WTC11 (cell line): ENCODE measurements at regions of chr20 and their contacts with region 1.

Region 1: DNA sequence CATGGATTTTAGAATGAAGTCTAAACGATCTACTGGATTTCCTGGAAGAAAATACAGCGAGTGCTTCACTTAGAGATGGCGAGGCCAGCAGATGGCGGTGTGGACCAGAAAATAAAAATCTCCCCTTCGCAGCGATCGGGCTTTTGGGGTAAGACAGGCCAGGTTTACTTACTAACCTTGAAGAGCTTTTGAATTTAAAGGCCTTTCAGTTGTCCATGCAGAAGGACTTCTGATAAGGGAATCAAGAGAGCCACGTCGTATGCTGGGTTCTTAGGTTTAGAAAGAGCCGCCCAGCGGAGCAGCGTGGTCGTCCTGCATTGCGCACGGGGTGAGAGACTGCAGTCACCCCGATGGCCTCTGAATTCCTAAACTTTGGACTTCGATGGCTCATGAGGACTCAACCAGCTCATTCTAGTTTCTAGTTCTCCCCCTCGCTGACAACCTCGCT is 125.2 kb upstream of the RALGAPA2 start:
- DNase-seq: peak; percentile 68
- ATAC-seq: peak; percentile 78
- H3K4me3 Mint-ChIP-seq: peak overlapping the region; percentile 46
- H3K27ac Mint-ChIP-seq: no peak overlapping the region
- H3K4me1 Mint-ChIP-seq: peaks cover 6% of the 10 kb centered on the region; the same call in 1 of the 2 replicates
- H3K27me3 Mint-ChIP-seq: peaks cover 3% of the 10 kb centered on the region
- CTCF ChIP-seq: peak; percentile 67

Region 2: DNA sequence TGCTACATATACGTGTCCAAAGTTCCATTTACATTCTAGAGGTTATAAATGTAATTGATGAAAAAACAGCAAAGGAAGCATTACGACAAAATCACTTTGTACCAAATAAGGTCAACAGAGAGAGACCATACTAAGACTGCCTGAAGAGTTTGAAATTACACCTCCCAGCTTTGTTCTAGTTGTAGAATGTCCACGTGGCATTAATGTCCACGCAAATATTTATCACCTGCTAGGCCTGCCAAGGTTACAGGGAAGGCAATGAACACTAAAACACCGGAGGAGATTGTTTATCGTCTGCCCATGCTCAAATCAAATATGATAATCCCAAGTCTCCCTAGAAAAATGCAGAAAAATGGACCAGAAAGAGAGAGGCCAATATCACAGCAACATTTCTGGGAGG is 131.3 kb before region 1 on chr20:
- CTCF ChIA-PET with region 1: no interaction called
- POLR2A ChIA-PET with region 1: no interaction called
- DNase-seq: no peak
- ATAC-seq: no peak
- H3K4me3 Mint-ChIP-seq: no peak overlapping the region
- H3K27ac Mint-ChIP-seq: no peak overlapping the region
- H3K4me1 Mint-ChIP-seq: peaks cover 20% of the 10 kb centered on the region
- H3K27me3 Mint-ChIP-seq: no peaks in the 10 kb centered on the region
- CTCF ChIP-seq: no peak

Region 3: GRCh38 chr20:20860078-20860806 is 22.6 kb after region 1 on chr20:
- CTCF ChIA-PET with region 1: interaction called, 48 read pairs
- POLR2A ChIA-PET with region 1: no interaction called
- DNase-seq: peak; percentile 99
- ATAC-seq: peak; percentile 81
- H3K4me3 Mint-ChIP-seq: no peak overlapping the region
- H3K27ac Mint-ChIP-seq: no peak overlapping the region
- H3K4me1 Mint-ChIP-seq: no peaks in the 10 kb centered on the region; the same call in 1 of the 2 replicates
- H3K27me3 Mint-ChIP-seq: peaks cover 4% of the 10 kb centered on the region
- CTCF ChIP-seq: peak; percentile 80

Region 4: DNA sequence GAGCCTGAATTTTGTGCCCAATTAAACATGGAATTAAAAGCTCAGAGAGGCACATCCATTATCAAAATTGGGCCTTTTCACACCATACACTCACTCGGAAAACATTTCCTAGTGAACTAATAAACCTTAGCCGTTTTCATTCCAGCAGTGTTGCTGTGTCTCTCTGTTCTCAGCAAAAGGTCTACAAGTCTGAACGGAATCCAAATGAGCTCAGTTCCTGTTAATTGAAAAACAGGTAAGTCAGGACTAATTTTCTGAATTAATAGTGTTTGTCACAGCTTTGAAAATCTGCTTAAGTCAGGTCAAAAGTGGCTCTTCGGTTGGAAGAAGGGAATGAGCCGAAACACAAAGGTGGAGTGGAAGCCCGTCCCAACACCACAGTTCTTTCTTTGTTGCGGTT is 38.1 kb after region 1 on chr20:
- CTCF ChIA-PET with region 1: no interaction called
- POLR2A ChIA-PET with region 1: no interaction called
- DNase-seq: no peak
- ATAC-seq: no peak
- H3K4me3 Mint-ChIP-seq: no peak overlapping the region
- H3K27ac Mint-ChIP-seq: no peak overlapping the region
- H3K4me1 Mint-ChIP-seq: no peaks in the 10 kb centered on the region
- H3K27me3 Mint-ChIP-seq: no peaks in the 10 kb centered on the region
- CTCF ChIP-seq: no peak

Region 5: DNA sequence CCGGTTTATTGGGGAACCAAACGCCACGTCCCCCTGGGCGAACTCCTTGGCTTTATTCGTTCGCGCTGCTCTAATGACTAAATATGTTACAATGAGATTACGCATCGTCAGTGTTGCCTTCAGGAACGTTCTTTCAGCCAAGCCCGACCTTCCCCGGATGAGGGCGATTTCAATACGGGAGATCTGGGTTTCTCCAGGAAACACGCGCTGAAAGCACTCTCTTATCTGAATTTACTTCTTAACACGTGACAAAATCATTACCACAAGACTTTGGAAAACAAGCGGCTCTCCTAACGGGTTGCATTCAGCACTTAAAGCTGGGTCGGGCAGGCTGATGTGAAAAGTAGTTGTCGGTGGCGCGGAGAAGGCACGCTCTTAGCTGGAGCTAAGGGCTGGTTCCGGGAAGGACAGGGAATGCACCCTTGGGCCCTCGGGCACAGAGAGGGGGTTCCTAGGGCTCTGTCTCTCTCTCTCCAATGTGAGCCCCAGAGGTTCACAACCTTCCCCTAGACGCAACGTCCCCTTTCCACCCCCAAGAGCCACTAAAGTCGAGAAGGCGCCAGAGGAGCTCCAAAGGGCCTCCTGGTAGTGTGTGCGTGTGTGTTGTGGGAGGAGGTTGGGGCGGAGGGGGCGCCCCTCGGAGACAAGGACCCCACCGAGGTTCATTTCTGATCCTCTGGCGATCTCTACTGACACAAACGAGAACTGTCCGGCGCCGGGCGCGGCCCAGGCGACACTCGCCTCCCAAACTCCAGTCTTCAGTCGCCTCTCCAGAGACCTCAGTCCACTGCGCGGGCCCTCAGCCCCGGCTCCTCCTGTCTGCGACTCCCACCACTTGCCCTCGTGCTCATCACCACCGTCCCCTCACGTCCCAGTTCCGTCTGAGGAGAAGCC is 683.4 kb after region 1 on chr20:
- CTCF ChIA-PET with region 1: interaction called, 25 read pairs
- POLR2A ChIA-PET with region 1: no interaction called
- DNase-seq: peak; percentile 70
- ATAC-seq: peak; percentile 43
- H3K4me3 Mint-ChIP-seq: peak overlapping the region; percentile 69
- H3K27ac Mint-ChIP-seq: no peak overlapping the region
- H3K4me1 Mint-ChIP-seq: peaks cover 71% of the 10 kb centered on the region
- H3K27me3 Mint-ChIP-seq: peaks cover 96% of the 10 kb centered on the region
- CTCF ChIP-seq: no peak